ENCODE measurements at regions of chr5 and their contacts with region 1.

Region 1: GRCh38 chr5:13987843-13988464 is 43.5 kb upstream of the DNAH5 start:
- DNase-seq: peak; percentile 34 to 83 (median 57)
- H3K4me3 ChIP-seq: no peak overlapping the region
- H3K27ac ChIP-seq: no peak overlapping the region
- H3K4me1 ChIP-seq: no peaks in the 10 kb centered on the region
- H3K27me3 ChIP-seq: no peaks in the 10 kb centered on the region
- CTCF ChIP-seq: peak; percentile 77 to 94 (median 84)
- POLR2A ChIP-seq: no peak

Region 2: GRCh38 chr5:14270209-14270702 is 282.3 kb after region 1 on chr5:
- intact Hi-C with region 1: loop called in 1 of 2 experiments (anchors 5 kb)
- DNase-seq: peak; percentile 46 to 78 (median 66)
- H3K4me3 ChIP-seq: no peak overlapping the region
- H3K27ac ChIP-seq: peak overlapping the region in 3 of 5 donors; percentile 14 to 41 (median 39)
- H3K4me1 ChIP-seq: peaks cover 13 to 39% of the 10 kb centered on the region in 2 donors
- H3K27me3 ChIP-seq: no peaks in the 10 kb centered on the region
- CTCF ChIP-seq: peak; percentile 75 to 87 (median 82)
- POLR2A ChIP-seq: no peak

Region 3: GRCh38 chr5:14364576-14365472 is 376.9 kb after region 1 on chr5:
- intact Hi-C with region 1: loop called in 1 of 2 experiments (anchors 10 kb)
- DNase-seq: peak in 2 of 7 donors; percentile 30 to 72
- H3K4me3 ChIP-seq: no peak overlapping the region
- H3K27ac ChIP-seq: no peak overlapping the region
- H3K4me1 ChIP-seq: no peaks in the 10 kb centered on the region
- H3K27me3 ChIP-seq: no peaks in the 10 kb centered on the region
- CTCF ChIP-seq: peak in 5 of 6 experiments; percentile 11 to 43 (median 41)
- POLR2A ChIP-seq: no peak

Region 4: GRCh38 chr5:14659821-14660607 is 672.1 kb after region 1 on chr5:
- intact Hi-C with region 1: loop called in 1 of 2 experiments (anchors 10 kb)
- DNase-seq: peak in 6 of 7 donors; percentile 54 to 67 (median 64)
- H3K4me3 ChIP-seq: no peak overlapping the region
- H3K27ac ChIP-seq: peak overlapping the region in 2 of 5 donors; percentile 29 to 37
- H3K4me1 ChIP-seq: peaks cover 0 to 9% of the 10 kb centered on the region in 2 donors
- H3K27me3 ChIP-seq: no peaks in the 10 kb centered on the region
- CTCF ChIP-seq: no peak
- POLR2A ChIP-seq: no peak

Measured in adrenal gland (tissue), 19 donors.